Esophagus squamous epithelium (tissue), 5 donors: ENCODE measurements at regions of chr7 and their contacts with region 1.

Region 1: GRCh38 chr7:91636129-91636724 is 244.3 kb downstream of the MTERF1 start:
- DNase-seq: no peak
- H3K4me3 ChIP-seq: no peak overlapping the region
- H3K27ac ChIP-seq: no peak overlapping the region
- H3K4me1 ChIP-seq: peaks cover 0 to 5% (median 0%) of the 10 kb centered on the region in 3 donors
- H3K27me3 ChIP-seq: no peaks in the 10 kb centered on the region
- CTCF ChIP-seq: peak in 5 of 6 experiments; percentile 37 to 76 (median 59)
- POLR2A ChIP-seq: no peak

Region 2: DNA sequence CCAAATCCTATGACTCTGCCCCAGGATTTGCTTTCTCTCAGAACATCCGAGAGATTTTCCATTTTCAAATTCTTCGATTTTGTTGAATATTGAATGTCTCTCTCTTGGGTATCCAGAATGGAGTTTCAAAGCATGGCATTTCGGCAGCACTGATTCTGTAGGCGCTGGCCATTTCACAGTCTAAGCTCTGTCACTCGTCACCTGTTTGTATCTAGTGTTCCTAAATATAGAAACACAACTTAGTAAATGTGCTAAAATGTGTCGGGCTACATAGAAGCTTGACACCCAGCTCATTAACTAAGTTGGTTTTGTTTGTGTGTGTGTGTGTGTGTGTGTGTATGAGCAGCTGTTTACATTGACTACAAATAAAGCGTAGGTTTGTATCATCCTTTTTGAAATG is 545.5 kb before region 1 on chr7:
- intact Hi-C with region 1: loop called (anchors 5 kb)
- DNase-seq: no peak
- H3K4me3 ChIP-seq: no peak overlapping the region
- H3K27ac ChIP-seq: no peak overlapping the region
- H3K4me1 ChIP-seq: peaks cover 0 to 5% (median 0%) of the 10 kb centered on the region in 3 donors
- H3K27me3 ChIP-seq: no peaks in the 10 kb centered on the region
- CTCF ChIP-seq: no peak
- POLR2A ChIP-seq: no peak

Region 3: GRCh38 chr7:91519241-91520158 is 116.7 kb before region 1 on chr7:
- intact Hi-C with region 1: no loop called
- DNase-seq: no peak
- H3K4me3 ChIP-seq: no peak overlapping the region
- H3K27ac ChIP-seq: no peak overlapping the region
- H3K4me1 ChIP-seq: no peaks in the 10 kb centered on the region
- H3K27me3 ChIP-seq: no peaks in the 10 kb centered on the region
- CTCF ChIP-seq: no peak
- POLR2A ChIP-seq: no peak